Mammary epithelial cell (primary cell): ENCODE measurements at regions of chr14 and their contacts with region 1.

Region 1: GRCh38 chr14:60184146-60184904 is 19.1 kb upstream of the DHRS7 start:
- DNase-seq: peak; percentile 39
- H3K4me3 ChIP-seq: peak overlapping the region; percentile 4 to 50 (median 37)
- H3K27ac ChIP-seq: peak overlapping the region; percentile 40
- H3K4me1 ChIP-seq: peaks cover 18% of the 10 kb centered on the region
- H3K27me3 ChIP-seq: no peaks in the 10 kb centered on the region
- CTCF ChIP-seq: peak; percentile 60 to 65

Region 2: GRCh38 chr14:59507063-59507780 is 677.1 kb before region 1 on chr14:
- CTCF ChIA-PET with region 1: interaction called, 3 read pairs
- dilution Hi-C with region 1: no loop called
- in situ Hi-C with region 1: no loop called
- intact Hi-C with region 1: loop called (anchors 2 kb)
- DNase-seq: peak; percentile 34
- H3K4me3 ChIP-seq: no peak overlapping the region
- H3K27ac ChIP-seq: no peak overlapping the region
- H3K4me1 ChIP-seq: no peaks in the 10 kb centered on the region
- H3K27me3 ChIP-seq: peaks cover under 1% of the 10 kb centered on the region
- CTCF ChIP-seq: peak; percentile 98 to 99

Region 3: DNA sequence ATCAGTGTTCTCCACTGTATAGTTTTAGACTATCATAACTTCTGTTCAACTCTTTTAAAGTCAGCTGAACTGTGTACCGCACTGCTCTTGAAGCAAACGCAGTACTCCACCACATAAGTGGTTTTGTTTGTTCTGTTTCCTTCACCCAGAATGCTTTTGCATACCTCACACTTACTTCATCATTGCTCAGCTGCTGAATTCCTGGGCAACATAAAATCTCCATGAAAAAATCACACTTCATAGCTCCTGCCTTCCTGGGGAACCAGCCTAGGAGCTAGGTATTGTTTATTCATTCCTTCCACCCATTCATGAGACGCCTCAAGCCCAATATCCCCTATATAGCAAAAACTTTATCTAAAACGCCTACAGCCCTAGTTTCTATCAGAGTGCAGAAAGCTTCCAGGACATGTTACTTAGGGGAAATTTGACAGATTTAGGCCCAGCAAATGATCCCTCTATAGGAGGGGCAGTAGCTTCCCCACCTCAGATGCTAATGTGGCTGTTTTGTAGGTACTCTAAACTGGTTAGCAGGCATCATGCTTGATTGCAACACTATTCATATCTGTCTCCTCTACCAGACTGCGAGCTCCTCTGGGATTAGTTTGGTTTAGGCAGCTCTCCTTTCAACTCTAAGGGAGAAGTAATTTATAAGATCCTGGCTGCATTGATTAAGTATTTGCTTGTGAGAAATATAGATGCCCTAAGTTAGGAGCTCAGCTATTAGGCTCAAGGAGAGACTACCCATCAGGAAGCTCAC is 219.9 kb before region 1 on chr14:
- CTCF ChIA-PET with region 1: interaction called, 3 read pairs
- dilution Hi-C with region 1: no loop called
- in situ Hi-C with region 1: loop called (anchors 10 kb)
- intact Hi-C with region 1: loop called (anchors 1 kb)
- DNase-seq: no peak
- H3K4me3 ChIP-seq: no peak overlapping the region
- H3K27ac ChIP-seq: no peak overlapping the region
- H3K4me1 ChIP-seq: no peaks in the 10 kb centered on the region
- H3K27me3 ChIP-seq: peaks cover 2% of the 10 kb centered on the region
- CTCF ChIP-seq: no peak

Region 4: GRCh38 chr14:60064491-60065072 is 119.7 kb before region 1 on chr14:
- CTCF ChIA-PET with region 1: interaction called, 3 read pairs
- dilution Hi-C with region 1: no loop called
- in situ Hi-C with region 1: loop called (anchors 10 kb)
- intact Hi-C with region 1: loop called (anchors 1 kb)
- DNase-seq: peak; percentile 6
- H3K4me3 ChIP-seq: no peak overlapping the region
- H3K27ac ChIP-seq: no peak overlapping the region
- H3K4me1 ChIP-seq: peaks cover 7% of the 10 kb centered on the region
- H3K27me3 ChIP-seq: no peaks in the 10 kb centered on the region
- CTCF ChIP-seq: peak; percentile 60 to 62

Region 5: GRCh38 chr14:60164712-60165546 is 19.4 kb before region 1 on chr14 and contains the start of gene DHRS7:
- CTCF ChIA-PET with region 1: no interaction called
- dilution Hi-C with region 1: no loop called
- in situ Hi-C with region 1: no loop called
- intact Hi-C with region 1: loop called (anchors 2 kb)
- DNase-seq: peak; percentile 70
- H3K4me3 ChIP-seq: peak within 1 kb of the TSS; percentile 87 to 100 (median 90)
- H3K27ac ChIP-seq: peak within 1 kb of the TSS; percentile 97
- H3K4me1 ChIP-seq: peaks cover 8% of the 10 kb centered on the region
- H3K27me3 ChIP-seq: no peaks in the 10 kb centered on the region
- CTCF ChIP-seq: peak; percentile 6 to 42
- total RNA-seq, gene DHRS7: 73.0 to 85.0 TPM

Region 6: DNA sequence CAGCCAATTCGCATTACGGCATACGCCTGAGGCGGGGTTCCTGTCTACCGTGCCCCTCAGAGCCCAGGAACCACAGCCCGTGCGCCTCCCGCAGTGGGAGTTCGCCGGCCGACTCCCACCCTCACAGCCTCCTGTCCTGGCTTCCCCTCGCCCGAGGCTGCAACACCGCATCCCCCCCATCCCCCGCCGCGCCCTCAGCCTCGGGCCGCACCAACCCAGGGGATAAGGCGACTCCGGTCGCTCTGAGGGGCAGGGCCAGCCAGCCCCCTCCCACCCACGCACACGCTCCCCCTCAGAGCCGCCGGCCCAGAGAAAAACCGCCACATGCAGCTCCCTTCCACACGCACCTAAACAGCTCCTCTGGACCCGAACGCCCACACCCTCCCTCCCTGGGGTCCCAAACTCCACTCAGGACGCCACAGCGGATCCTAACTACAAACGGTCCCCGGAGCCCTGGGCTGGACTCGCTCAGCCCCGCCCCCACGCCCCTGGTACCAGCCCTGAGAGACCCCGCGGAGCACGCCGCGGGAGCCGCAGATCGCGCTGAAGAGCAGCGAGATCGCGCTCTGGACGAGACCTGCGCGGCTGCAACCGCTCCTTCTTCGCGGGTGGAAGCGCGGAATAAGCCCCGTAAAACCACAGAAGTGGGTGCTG is 301.4 kb after region 1 on chr14 and contains the start of gene C14orf39:
- CTCF ChIA-PET with region 1: no interaction called
- dilution Hi-C with region 1: no loop called
- in situ Hi-C with region 1: no loop called
- intact Hi-C with region 1: loop called (anchors 5 kb)
- DNase-seq: no peak
- H3K4me3 ChIP-seq: peak within 1 kb of the TSS in 2 of 3 experiments; percentile 9 to 10
- H3K27ac ChIP-seq: no peak within 1 kb of the TSS
- H3K4me1 ChIP-seq: peaks cover 3% of the 10 kb centered on the region
- H3K27me3 ChIP-seq: peaks cover 31% of the 10 kb centered on the region
- CTCF ChIP-seq: no peak
- total RNA-seq, gene C14orf39: not detected